Panc1 (cell line): ENCODE measurements at regions of chr4 and their contacts with region 1.

Region 1: DNA sequence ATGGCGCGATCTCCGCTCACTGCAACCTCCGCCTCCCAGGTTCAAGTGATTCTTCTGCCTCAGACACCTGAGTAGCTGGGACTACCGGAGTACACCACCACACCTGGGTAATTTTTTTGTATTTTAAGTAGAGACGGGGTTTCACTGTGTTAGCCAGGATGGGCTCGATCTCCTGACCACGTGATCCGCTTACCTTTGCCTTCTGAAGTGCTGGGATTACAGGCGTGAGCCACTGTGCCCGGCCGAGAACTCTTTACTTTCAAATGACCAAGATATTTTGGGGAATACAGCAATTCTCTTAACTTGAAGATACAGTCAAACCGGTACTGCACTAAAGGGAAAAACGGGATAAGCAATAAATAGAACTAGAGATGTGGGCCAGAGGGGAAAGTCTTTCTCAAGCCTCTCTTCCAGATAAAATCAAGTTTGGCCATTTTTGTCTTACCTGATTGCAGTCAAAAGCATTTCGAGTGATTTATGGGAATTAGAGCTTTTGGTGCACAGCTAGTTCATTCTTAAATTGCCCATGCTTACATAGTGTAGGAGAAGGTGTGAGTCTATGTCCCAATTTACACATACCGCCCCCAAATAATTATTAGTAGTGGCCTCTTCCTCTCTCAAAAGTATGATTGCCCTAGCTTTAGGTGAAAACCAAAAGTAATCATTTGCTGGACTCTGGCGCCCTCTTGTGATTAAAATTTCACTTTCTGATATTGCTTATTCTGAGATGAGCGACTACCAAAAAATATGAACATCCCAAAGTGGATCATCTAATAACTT is 53.2 kb upstream of the ABCG2 start:
- DNase-seq: peak; percentile 30
- ATAC-seq: peak; percentile 81
- H3K4me3 ChIP-seq: no peak overlapping the region
- H3K27ac ChIP-seq: no peak overlapping the region; the same call in 1 of the 2 replicates
- H3K4me1 ChIP-seq: no peaks in the 10 kb centered on the region
- H3K27me3 ChIP-seq: no peaks in the 10 kb centered on the region; the same call in 1 of the 2 replicates
- CTCF ChIP-seq: peak; percentile 62

Region 2: DNA sequence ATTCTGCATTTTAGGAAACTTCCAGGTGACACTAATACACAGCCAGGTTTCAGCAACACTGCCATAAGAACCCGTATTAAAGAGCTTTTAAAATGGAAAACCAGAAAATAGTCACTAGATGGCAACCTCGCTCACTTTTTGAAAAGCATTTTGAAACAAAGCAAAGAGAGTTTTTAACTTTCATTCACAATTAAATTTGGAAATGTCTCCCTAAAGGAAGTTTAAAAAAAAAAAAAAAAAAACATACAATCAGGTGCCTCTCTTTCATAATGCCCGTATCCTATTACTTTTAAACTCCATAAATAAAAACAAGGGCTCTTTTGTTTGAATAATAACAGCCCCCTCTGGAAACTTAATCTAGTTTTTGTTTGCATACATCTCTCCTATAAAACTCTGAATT is 358.6 kb before region 1 on chr4:
- CTCF ChIA-PET with region 1: interaction called, 4 read pairs
- POLR2A ChIA-PET with region 1: no interaction called
- in situ Hi-C with region 1: no loop called
- intact Hi-C with region 1: loop called (anchors 5 kb)
- DNase-seq: no peak
- ATAC-seq: no peak
- H3K4me3 ChIP-seq: no peak overlapping the region
- H3K27ac ChIP-seq: no peak overlapping the region
- H3K4me1 ChIP-seq: no peaks in the 10 kb centered on the region
- H3K27me3 ChIP-seq: peaks cover 3% of the 10 kb centered on the region; the same call in 1 of the 2 replicates
- CTCF ChIP-seq: peak; percentile 50; the same call in 1 of the 2 replicates

Region 3: DNA sequence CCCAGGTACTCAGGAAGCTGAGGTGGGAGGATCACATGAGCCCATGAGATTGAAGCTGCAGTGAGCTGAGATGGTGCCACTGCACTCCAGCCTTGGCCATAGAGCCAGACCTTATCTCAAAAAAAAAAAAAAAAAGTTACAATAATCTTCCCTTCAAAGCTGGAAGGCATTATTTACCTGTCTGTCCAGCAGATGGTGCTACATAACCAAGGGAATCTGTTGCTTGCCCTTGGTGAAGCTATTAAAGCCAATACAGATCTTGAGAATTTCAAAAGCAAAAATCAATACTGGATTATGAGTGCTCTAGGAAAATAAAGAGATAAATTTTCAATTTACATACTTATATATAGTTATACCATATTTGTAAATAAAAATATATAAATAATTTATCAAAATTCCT is 178.4 kb before region 1 on chr4:
- CTCF ChIA-PET with region 1: interaction called, 12 read pairs
- POLR2A ChIA-PET with region 1: no interaction called
- in situ Hi-C with region 1: no loop called
- intact Hi-C with region 1: loop called (anchors 1 kb)
- DNase-seq: peak; percentile 18
- ATAC-seq: no peak
- H3K4me3 ChIP-seq: no peak overlapping the region
- H3K27ac ChIP-seq: no peak overlapping the region
- H3K4me1 ChIP-seq: no peaks in the 10 kb centered on the region
- H3K27me3 ChIP-seq: no peaks in the 10 kb centered on the region
- CTCF ChIP-seq: peak; percentile 70; the same call in 1 of the 2 replicates

Region 4: DNA sequence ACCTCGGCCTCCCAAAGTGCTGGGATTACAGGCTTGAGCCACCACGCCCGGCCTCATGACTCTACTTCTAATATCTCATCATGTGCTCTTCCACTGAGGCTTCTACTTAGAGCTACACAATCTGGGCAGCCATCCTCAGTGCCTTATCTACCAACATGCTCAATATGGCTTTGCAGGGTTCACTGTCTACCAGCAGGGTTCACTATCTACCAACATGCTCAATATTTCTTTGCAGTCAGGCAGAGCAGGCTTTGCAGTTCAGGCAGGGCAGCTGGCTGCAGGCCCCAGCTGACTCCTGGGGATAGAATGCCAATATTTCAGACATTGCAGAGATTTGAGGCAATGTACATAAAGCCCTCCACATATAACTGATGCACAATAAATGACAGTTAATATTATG is 156.8 kb before region 1 on chr4:
- CTCF ChIA-PET with region 1: interaction called, 4 read pairs
- POLR2A ChIA-PET with region 1: no interaction called
- in situ Hi-C with region 1: no loop called
- intact Hi-C with region 1: loop called (anchors 1 kb)
- DNase-seq: peak; percentile 28
- ATAC-seq: peak; percentile 94
- H3K4me3 ChIP-seq: no peak overlapping the region
- H3K27ac ChIP-seq: no peak overlapping the region
- H3K4me1 ChIP-seq: no peaks in the 10 kb centered on the region
- H3K27me3 ChIP-seq: no peaks in the 10 kb centered on the region
- CTCF ChIP-seq: peak; percentile 66

Region 5: GRCh38 chr4:88275516-88275915 is 63.9 kb after region 1 on chr4:
- CTCF ChIA-PET with region 1: no interaction called
- POLR2A ChIA-PET with region 1: no interaction called
- in situ Hi-C with region 1: no loop called
- intact Hi-C with region 1: no loop called
- DNase-seq: no peak
- ATAC-seq: no peak
- H3K4me3 ChIP-seq: no peak overlapping the region
- H3K27ac ChIP-seq: no peak overlapping the region
- H3K4me1 ChIP-seq: no peaks in the 10 kb centered on the region
- H3K27me3 ChIP-seq: no peaks in the 10 kb centered on the region
- CTCF ChIP-seq: no peak

Region 6: DNA sequence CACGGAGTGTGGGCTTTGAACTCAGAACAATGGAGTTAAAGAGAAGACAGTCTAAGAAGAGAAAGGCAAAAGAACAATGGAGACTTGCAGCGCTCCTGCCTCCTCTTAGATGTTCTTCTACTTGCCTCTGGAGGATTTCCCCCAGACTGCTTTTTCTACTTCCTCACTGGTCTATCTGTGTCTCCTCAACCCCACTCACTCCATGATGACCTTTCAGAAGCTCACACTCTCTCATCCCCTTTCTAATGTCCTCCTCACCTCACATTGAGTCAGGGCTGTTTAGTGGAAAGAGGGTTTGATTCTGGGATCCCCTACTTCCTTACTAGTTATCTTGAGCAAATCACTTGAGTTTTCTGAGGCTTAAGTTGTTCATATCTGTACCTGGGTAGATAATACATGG is 154.8 kb after region 1 on chr4:
- CTCF ChIA-PET with region 1: interaction called, 4 read pairs
- POLR2A ChIA-PET with region 1: interaction called, 4 read pairs
- in situ Hi-C with region 1: no loop called
- intact Hi-C with region 1: loop called (anchors 5 kb)
- DNase-seq: no peak
- ATAC-seq: no peak
- H3K4me3 ChIP-seq: no peak overlapping the region
- H3K27ac ChIP-seq: no peak overlapping the region
- H3K4me1 ChIP-seq: no peaks in the 10 kb centered on the region
- H3K27me3 ChIP-seq: no peaks in the 10 kb centered on the region
- CTCF ChIP-seq: no peak

Region 7: GRCh38 chr4:88526221-88526815 is 314.7 kb after region 1 on chr4:
- CTCF ChIA-PET with region 1: no interaction called
- POLR2A ChIA-PET with region 1: interaction called, 10 read pairs
- in situ Hi-C with region 1: no loop called
- intact Hi-C with region 1: no loop called
- DNase-seq: no peak
- ATAC-seq: no peak
- H3K4me3 ChIP-seq: no peak overlapping the region
- H3K27ac ChIP-seq: no peak overlapping the region
- H3K4me1 ChIP-seq: peaks cover 3% of the 10 kb centered on the region
- H3K27me3 ChIP-seq: no peaks in the 10 kb centered on the region
- CTCF ChIP-seq: peak; percentile 28; the same call in 1 of the 2 replicates